Mammary epithelial cell (primary cell): ENCODE measurements at regions of chrX and their contacts with region 1.

Region 1: DNA sequence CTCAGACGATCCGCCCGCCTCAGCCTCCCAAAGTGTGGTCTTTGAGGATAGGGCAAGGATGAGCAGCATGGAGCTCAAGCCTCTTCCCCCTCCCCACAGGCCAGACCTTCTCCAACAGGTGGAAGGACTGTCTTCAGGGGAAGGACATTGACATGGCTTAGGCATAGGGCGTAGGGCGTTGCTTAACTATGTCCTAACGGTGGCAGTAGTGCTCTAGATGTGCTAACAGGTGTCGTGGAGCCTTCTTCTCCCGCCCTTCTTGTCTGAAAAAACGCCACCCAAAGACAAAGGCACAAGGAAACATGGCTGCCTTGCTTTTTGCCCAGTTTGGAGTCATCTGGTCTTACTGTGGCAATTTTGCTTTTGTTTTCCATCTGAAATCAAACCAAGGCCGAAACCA is 219.8 kb downstream of the OR13H1 start:
- DNase-seq: peak; percentile 77
- H3K4me3 ChIP-seq: peak overlapping the region; percentile 5 to 41 (median 19)
- H3K27ac ChIP-seq: no peak overlapping the region
- H3K4me1 ChIP-seq: peaks cover 7% of the 10 kb centered on the region
- H3K27me3 ChIP-seq: no peaks in the 10 kb centered on the region
- CTCF ChIP-seq: peak; percentile 40 to 74

Region 2: GRCh38 chrX:131728295-131729145 is 35.2 kb before region 1 on chrX:
- CTCF ChIA-PET with region 1: no interaction called
- dilution Hi-C with region 1: no loop called
- in situ Hi-C with region 1: no loop called
- intact Hi-C with region 1: loop called (anchors 1 kb)
- DNase-seq: peak; percentile 78
- H3K4me3 ChIP-seq: peak overlapping the region; percentile 33 to 49 (median 40)
- H3K27ac ChIP-seq: peak overlapping the region; percentile 36
- H3K4me1 ChIP-seq: no peaks in the 10 kb centered on the region
- H3K27me3 ChIP-seq: no peaks in the 10 kb centered on the region
- CTCF ChIP-seq: peak; percentile 33 to 60

Region 3: GRCh38 chrX:131746474-131746968 is 17.2 kb before region 1 on chrX:
- CTCF ChIA-PET with region 1: no interaction called
- dilution Hi-C with region 1: no loop called
- in situ Hi-C with region 1: no loop called
- intact Hi-C with region 1: loop called (anchors 1 kb)
- DNase-seq: peak; percentile 79
- H3K4me3 ChIP-seq: peak overlapping the region; percentile 54 to 66 (median 57)
- H3K27ac ChIP-seq: peak overlapping the region; percentile 57
- H3K4me1 ChIP-seq: no peaks in the 10 kb centered on the region
- H3K27me3 ChIP-seq: no peaks in the 10 kb centered on the region
- CTCF ChIP-seq: peak; percentile 22 to 45

Region 4: GRCh38 chrX:131812836-131813825 is 49.5 kb after region 1 on chrX:
- CTCF ChIA-PET with region 1: no interaction called
- dilution Hi-C with region 1: no loop called
- in situ Hi-C with region 1: no loop called
- intact Hi-C with region 1: loop called (anchors 1 kb)
- DNase-seq: peak; percentile 79
- H3K4me3 ChIP-seq: peak overlapping the region; percentile 24 to 43 (median 39)
- H3K27ac ChIP-seq: no peak overlapping the region
- H3K4me1 ChIP-seq: no peaks in the 10 kb centered on the region
- H3K27me3 ChIP-seq: no peaks in the 10 kb centered on the region
- CTCF ChIP-seq: peak; percentile 18 to 49

Region 5: DNA sequence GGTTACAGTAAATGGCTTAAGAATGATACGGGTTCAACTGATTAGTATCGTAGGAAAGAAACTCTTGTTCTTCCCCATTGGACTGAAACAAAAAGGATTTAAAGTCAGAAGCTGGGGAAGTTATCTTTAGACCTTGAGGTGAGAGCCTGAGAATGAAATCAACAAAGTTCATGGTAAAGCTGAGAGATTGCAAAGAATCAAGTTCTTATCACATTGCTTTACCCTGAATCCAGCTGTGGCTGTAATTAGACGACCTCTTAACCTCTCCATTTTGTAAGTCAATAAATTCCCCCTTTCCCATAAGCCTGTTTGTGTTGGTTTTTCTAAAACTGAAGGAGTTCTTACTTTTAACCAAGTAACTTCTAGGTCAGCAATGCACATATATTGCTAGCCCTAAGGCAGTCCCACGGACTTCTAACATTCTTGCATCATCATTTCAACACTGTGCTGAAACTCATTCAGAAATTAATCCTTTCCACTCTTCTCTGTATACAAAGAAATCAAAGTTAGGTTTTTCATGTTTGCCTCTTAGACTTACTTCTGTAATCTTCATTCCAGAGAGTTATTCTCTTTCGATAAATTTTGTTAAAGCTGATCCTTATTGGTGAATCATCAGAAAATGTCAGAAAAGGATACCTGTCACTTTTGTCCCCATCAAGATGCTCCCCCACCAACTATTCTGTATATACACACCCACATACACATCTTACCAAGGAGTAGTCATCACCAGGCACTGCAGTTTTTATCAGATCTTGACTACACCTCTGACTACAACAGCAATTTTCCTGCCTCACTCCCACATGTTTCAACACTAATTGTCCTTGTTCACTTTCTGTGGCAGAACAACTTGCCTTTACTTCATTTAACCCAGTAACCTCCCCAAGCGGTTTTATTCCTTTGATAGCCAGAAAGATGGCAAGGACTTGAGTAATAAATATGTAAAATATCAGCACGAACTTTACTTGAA is 181.5 kb after region 1 on chrX:
- CTCF ChIA-PET with region 1: no interaction called
- dilution Hi-C with region 1: no loop called
- in situ Hi-C with region 1: no loop called
- intact Hi-C with region 1: no loop called
- DNase-seq: no peak
- H3K4me3 ChIP-seq: no peak overlapping the region
- H3K27ac ChIP-seq: no peak overlapping the region
- H3K4me1 ChIP-seq: no peaks in the 10 kb centered on the region
- H3K27me3 ChIP-seq: peaks cover 3% of the 10 kb centered on the region
- CTCF ChIP-seq: no peak